ENCODE measurements at regions of chr10 and their contacts with region 1.

Region 1: DNA sequence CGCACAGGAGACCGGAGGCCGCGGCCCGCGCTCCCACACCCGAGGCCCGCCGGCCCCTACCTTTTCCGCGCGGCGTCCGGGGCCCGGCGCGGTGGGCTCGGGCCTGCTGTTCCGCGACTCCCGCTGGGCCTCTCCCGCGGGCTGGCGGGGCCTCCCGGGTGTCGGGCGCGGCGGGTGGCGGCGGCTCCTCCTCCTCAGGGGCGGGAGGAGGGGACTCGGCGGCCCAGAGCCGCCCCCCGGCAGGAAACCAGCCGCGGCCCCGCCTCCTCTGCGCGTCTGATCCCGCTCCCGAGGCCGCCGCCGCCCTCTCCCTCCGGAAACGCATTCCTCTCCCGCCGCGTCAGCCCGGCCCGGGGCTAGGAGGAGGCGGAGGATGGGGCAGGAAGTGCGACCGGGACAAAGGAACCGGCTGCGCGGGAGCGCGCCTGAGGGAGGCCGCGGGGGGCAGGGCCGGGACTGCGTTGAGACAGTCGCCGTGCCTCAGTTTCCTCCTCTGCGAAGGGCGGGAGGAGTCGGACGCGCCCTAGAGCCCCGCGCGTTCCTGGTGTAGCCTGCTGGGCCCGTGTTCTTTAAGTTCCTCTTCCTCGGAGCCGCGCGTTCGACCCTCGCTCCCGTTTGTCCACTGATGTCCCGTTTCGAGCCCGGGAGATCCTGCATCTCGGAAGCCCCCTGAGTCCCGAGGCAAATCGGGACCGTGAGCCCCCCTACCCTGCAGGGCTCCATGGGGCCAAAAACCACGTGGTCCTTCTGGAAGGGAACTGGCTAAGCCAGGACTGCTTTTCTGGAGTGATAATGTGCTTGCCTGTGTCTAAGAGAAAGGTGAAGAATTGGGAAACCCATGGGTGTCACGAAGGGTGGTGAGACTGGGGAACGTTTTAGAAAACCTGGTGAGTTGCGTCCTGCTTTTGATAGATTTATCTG is at the start of gene ITGB1:
- DNase-seq: peak; percentile 92
- ATAC-seq: peak; percentile 83
- H3K4me3 Mint-ChIP-seq: peak within 1 kb of the TSS; percentile 83
- H3K27ac Mint-ChIP-seq: peak within 1 kb of the TSS; percentile 96
- H3K4me1 Mint-ChIP-seq: peaks cover 43% of the 10 kb centered on the region
- H3K27me3 Mint-ChIP-seq: peaks cover 10% of the 10 kb centered on the region
- total RNA-seq, gene ITGB1: 57.6 to 68.9 TPM

Region 2: DNA sequence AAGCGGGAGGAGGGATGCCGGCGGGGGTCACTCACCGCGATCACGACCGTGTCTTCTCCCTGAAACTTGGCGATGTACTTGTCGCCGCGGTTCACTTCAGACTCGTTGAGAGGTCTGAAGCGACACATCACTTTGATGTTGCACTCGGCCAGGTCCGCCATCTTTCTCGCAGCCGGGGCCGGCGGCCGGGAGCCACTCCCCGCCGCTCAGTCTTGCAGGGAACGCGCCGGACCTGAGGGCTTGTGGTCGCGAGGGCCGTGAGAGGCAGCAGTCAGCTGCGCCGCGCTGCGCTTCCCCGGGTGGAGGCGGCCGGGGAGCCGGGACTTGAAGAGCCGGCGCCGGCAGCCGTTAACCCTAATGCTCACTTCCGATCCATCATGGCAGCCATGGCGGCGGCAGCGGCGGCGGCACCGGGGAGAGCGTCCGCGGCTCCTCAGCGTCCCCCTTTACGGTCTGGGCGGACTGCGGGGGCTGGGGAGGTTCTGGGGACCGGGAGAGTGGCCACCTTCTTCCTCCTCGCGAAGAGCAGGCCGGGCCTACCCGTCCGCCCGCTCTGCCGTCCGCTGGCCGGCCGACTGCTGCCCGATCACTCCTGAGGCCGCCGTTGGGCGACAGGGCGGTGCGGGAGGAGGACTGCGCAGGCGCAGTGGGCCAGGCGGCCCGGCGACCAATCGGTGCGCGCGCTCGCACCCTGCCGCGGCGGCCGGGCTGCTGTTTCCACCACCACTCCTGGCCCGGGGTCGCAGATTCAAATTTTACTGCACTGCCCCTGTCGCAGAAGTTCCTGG is 902.3 kb before region 1 on chr10 and contains the start of gene KIF5B:
- CTCF ChIA-PET with region 1: no interaction called
- POLR2A ChIA-PET with region 1: no interaction called
- intact Hi-C with region 1: loop called in 1 of 2 experiments (anchors 1 kb)
- DNase-seq: peak; percentile 92
- ATAC-seq: peak; percentile 92
- H3K4me3 Mint-ChIP-seq: peak within 1 kb of the TSS; percentile 97
- H3K27ac Mint-ChIP-seq: peak within 1 kb of the TSS; percentile 96
- H3K4me1 Mint-ChIP-seq: peaks cover 37% of the 10 kb centered on the region
- H3K27me3 Mint-ChIP-seq: no peaks in the 10 kb centered on the region
- total RNA-seq, gene KIF5B: 57.4 to 59.9 TPM

Region 3: DNA sequence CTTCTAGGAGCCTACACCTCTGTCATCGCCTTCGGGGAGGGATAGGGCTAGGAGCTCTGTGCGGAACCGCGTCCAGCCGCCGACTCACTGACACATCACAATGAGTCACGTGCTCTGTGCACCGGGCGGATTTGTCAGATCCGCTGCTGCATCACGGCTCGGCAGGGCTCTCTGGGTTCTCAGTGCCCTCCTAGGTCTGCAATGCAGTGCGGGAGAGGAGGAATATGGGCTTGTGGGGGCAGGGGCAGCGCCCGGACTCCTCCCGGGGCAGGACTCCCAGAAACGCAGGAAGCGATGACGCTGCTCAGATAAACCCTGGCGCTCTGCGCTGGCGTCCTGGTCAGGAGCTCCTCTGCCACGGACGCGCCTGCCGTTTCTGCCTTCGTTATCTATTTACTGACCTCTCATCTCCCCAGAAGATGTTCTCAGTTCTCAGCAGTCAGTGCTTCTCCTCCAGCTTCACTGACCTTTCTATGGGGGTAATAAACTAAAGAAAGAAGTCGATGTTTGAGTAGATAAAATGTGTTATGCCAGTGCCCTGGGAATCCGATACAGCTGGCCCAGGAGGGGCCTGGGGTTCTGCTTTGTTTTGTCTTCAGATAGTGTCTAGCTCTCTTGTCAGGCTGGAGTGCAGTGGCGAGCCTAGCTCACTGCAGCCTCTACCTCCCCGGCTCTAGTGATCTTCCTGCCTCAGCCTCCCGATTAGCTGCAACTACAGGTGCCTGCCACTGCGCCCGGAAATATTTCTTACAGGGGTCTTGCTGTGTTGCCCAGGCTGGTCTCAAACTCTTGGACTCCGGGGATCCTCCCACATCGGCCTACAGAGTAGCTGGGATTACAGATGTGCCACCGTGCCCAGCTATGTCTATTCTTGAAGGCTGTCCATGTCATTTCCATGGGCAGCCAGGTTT is 22.5 kb after region 1 on chr10:
- CTCF ChIA-PET with region 1: interaction called, 5 read pairs
- POLR2A ChIA-PET with region 1: interaction called, 4 read pairs
- intact Hi-C with region 1: loop called (anchors 1 to 2 kb)
- DNase-seq: peak; percentile 92
- ATAC-seq: peak; percentile 99
- H3K4me3 Mint-ChIP-seq: peak overlapping the region; percentile 83
- H3K27ac Mint-ChIP-seq: peak overlapping the region; percentile 91
- H3K4me1 Mint-ChIP-seq: peaks cover 29% of the 10 kb centered on the region
- H3K27me3 Mint-ChIP-seq: no peaks in the 10 kb centered on the region

Region 4: DNA sequence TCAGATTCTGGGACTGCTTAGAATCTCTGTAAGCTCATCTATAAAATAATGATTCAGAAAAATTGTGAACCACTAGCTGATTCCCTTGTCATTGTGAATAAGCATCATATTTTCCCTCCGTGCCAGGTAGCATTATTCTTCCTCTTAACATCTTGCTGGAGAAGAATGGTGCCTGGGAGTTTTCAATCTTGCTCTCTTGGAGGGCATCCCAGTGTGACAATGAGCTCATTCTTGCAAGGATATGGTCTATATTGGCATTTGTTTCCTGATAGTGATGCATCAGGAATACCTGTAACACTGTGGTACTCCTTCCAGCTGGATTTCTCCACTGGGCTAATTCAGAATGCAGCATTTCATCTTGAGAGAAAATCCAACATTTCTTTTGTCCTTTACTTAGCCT is 126.1 kb after region 1 on chr10:
- CTCF ChIA-PET with region 1: no interaction called
- POLR2A ChIA-PET with region 1: interaction called, 16 read pairs
- intact Hi-C with region 1: no loop called
- DNase-seq: no peak
- ATAC-seq: no peak
- H3K4me3 Mint-ChIP-seq: no peak overlapping the region
- H3K27ac Mint-ChIP-seq: no peak overlapping the region
- H3K4me1 Mint-ChIP-seq: peaks cover 14% of the 10 kb centered on the region
- H3K27me3 Mint-ChIP-seq: no peaks in the 10 kb centered on the region

Region 5: GRCh38 chr10:33248638-33249037 is 290.3 kb after region 1 on chr10:
- CTCF ChIA-PET with region 1: no interaction called
- POLR2A ChIA-PET with region 1: no interaction called
- intact Hi-C with region 1: loop called in 1 of 2 experiments (anchors 5 kb)
- DNase-seq: peak; percentile 30
- ATAC-seq: peak; percentile 83
- H3K4me3 Mint-ChIP-seq: no peak overlapping the region
- H3K27ac Mint-ChIP-seq: peak overlapping the region; percentile 39
- H3K4me1 Mint-ChIP-seq: peaks cover 71% of the 10 kb centered on the region
- H3K27me3 Mint-ChIP-seq: peaks cover 12% of the 10 kb centered on the region

Measured in activated CD4-positive, alpha-beta T cell treated with anti-CD3 and anti-CD28 coated beads for 36 hours (primary cell).